Transverse colon (tissue), 4 donors: ENCODE measurements at regions of chr3 and their contacts with region 1.

Region 1: GRCh38 chr3:72155391-72156064 is 370.6 kb upstream of the PROK2 start:
- DNase-seq: peak; percentile 53
- H3K4me3 ChIP-seq: no peak overlapping the region
- H3K27ac ChIP-seq: peak overlapping the region; percentile 74 to 78 (median 76)
- H3K4me1 ChIP-seq: peaks cover 18 to 48% (median 41%) of the 10 kb centered on the region in 4 donors
- H3K27me3 ChIP-seq: no peaks in the 10 kb centered on the region
- CTCF ChIP-seq: no peak
- EP300 ChIP-seq: no peak
- POLR2A ChIP-seq: no peak

Region 2: DNA sequence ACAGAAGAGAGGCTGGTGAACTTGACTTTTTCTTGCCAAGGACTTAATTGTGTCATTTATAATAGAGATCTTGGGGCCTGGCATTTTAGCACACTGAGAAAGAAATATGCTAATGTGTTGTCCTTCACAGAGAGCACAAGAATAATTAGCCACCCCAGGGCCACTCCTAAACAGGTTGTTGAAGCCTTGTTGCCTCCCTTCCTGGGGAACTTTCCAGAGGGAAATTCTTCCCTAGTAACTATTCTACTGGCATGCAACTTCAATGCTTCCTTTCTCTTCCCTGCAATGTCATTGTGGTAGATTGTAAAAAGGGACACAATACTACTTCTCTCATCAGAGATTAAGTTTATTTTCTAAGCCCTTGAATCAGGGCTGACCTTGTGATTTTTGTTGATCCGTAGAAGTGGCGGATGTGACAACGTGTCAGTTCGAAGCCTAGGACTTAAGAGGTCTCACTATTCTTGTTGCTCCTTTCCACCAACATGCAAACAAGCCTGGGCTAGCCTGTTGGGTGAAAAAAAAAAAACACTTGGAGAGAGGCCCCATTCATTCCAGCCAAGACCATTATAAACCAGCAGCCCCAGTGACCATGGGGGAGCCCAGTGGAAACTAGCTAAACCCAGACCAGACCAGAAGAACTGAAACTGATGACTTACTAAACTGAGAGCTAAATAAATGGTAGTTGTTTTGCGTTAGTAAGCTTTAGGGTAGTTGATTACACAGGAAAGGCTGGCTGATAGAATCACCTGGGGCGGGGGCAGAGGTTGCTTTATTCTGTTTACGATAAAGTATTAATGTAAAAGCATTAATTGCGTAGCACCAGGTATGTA is 405.5 kb after region 1 on chr3:
- in situ Hi-C with region 1: no loop called
- intact Hi-C with region 1: no loop called
- DNase-seq: no peak
- H3K4me3 ChIP-seq: no peak overlapping the region
- H3K27ac ChIP-seq: no peak overlapping the region
- H3K4me1 ChIP-seq: no peaks in the 10 kb centered on the region
- H3K27me3 ChIP-seq: no peaks in the 10 kb centered on the region
- CTCF ChIP-seq: no peak
- EP300 ChIP-seq: no peak
- POLR2A ChIP-seq: no peak

Region 3: GRCh38 chr3:73451306-73451944 is 1295.9 kb after region 1 on chr3:
- in situ Hi-C with region 1: no loop called
- intact Hi-C with region 1: loop called (anchors 5 kb)
- DNase-seq: no peak
- H3K4me3 ChIP-seq: no peak overlapping the region
- H3K27ac ChIP-seq: no peak overlapping the region
- H3K4me1 ChIP-seq: peaks cover 0 to 19% (median 6%) of the 10 kb centered on the region in 4 donors
- H3K27me3 ChIP-seq: no peaks in the 10 kb centered on the region
- CTCF ChIP-seq: no peak
- EP300 ChIP-seq: no peak
- POLR2A ChIP-seq: no peak